GM13977 (cell line): ENCODE measurements at regions of chr11 and their contacts with region 1.

Region 1: GRCh38 chr11:129323896-129324512 is 51.6 kb upstream of the BARX2 start:
- DNase-seq: no peak
- CTCF ChIP-seq: no peak

Region 2: DNA sequence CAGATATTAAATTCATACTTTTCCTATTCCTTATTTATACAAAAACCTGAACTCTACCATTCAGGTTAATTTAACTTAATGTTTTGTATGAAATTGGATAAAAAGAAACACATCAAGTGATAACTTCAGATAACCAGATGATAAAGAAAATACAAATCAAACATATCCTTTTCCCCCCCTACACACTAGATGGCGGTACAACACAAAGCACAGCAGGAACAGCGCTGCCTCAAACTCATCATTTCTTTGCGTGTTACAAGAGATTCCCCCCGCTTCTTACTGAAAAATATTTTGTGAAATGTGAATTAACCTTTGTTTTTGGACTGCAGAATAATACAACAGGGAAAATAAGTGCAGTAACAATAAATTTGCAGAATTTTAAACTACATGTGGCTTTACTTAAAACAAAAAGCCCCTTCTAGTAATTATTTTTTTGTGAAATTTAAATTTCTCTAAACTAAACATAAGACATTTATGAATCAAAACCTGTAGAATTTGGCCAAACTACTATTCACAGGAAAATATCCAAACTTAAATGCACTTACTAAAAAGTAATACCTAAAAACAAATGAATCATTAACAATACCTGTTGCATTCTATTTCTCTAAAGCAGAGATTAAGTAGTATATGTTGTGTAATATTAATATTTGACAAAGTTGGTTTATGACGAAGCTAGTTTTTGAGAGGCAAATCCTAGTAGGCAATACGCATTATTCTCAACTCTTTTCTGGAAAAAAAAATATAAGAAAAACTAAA is 206.2 kb before region 1 on chr11:
- in situ Hi-C with region 1: loop called (anchors 25 kb)
- DNase-seq: peak; percentile 40
- CTCF ChIP-seq: peak; percentile 80